Caco-2 (cell line): ENCODE measurements at regions of chr15 and their contacts with region 1.

Region 1: GRCh38 chr15:98904544-98904943 is 103.0 kb downstream of the PGPEP1L start:
- DNase-seq: peak; percentile 57 to 70
- H3K4me3 ChIP-seq: no peak overlapping the region
- H3K4me3 Mint-ChIP-seq: no peak overlapping the region
- H3K27ac Mint-ChIP-seq: no peak overlapping the region
- H3K4me1 ChIP-seq: peaks cover 60% of the 10 kb centered on the region
- H3K4me1 Mint-ChIP-seq: peaks cover 27% of the 10 kb centered on the region
- H3K27me3 ChIP-seq: no peaks in the 10 kb centered on the region
- H3K27me3 Mint-ChIP-seq: no peaks in the 10 kb centered on the region
- CTCF ChIP-seq: peak; percentile 52 to 77

Region 2: GRCh38 chr15:98658831-98659699 is 245.5 kb before region 1 on chr15:
- CTCF ChIA-PET with region 1: no interaction called
- POLR2A ChIA-PET with region 1: no interaction called
- intact Hi-C with region 1: loop called (anchors 2 kb)
- DNase-seq: peak in 1 of 2 experiments; percentile 63
- H3K4me3 ChIP-seq: no peak overlapping the region
- H3K4me3 Mint-ChIP-seq: no peak overlapping the region
- H3K27ac Mint-ChIP-seq: no peak overlapping the region
- H3K4me1 ChIP-seq: peaks cover 12% of the 10 kb centered on the region; the same call in 1 of the 2 replicates
- H3K4me1 Mint-ChIP-seq: peaks cover 20% of the 10 kb centered on the region
- H3K27me3 ChIP-seq: no peaks in the 10 kb centered on the region
- H3K27me3 Mint-ChIP-seq: no peaks in the 10 kb centered on the region
- CTCF ChIP-seq: peak; percentile 79 to 81

Region 3: DNA sequence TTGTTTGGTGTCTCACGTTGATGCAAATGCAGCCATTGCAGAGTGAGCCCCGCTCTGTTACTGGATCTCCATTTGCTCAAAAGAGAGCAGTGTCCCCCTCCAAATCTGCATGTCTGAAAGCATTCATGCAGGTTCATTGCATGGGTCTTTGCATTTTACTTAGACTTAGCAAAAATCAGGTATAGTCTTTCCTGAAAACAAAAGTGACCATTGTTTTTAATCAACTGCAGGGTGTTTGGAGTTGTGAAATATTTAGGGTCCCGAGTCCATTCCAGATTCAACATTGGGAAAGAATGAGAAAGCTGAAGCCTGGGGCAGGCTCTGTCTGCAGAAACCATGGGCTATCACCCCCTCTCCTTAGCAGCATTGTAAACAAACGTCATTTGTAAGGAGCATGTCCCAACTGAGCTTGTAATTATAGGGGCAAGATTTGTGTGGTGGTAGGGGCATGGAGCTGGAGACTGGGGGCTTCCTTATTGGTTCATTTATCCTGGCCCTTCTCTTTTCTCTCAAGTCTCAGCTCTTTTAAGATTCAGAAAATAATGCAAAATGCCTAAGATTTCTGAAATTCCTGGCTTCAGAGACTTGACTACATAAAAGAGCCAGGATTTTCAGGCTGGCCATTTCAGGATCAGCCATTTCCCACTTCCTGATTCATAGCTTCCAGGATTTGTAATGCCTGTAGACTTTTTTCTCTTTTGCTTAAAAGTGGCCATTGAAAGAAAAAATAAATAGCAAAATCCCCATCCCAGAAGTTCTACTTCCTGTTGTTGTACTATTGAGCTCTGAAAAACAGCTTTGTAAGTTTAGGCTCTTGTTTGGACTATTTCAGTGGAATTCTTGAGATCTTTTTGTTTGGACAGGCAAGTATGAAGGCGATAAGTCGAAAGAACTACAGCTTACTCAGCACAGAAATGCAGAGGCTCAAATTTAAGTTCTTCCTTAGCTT is 233.2 kb before region 1 on chr15:
- CTCF ChIA-PET with region 1: no interaction called
- POLR2A ChIA-PET with region 1: no interaction called
- intact Hi-C with region 1: loop called (anchors 5 kb)
- DNase-seq: peak in 1 of 2 experiments; percentile 60
- H3K4me3 ChIP-seq: no peak overlapping the region
- H3K4me3 Mint-ChIP-seq: peak overlapping the region; percentile 56
- H3K27ac Mint-ChIP-seq: peak overlapping the region; percentile 82
- H3K4me1 ChIP-seq: peaks cover 68% of the 10 kb centered on the region
- H3K4me1 Mint-ChIP-seq: peaks cover 42% of the 10 kb centered on the region
- H3K27me3 ChIP-seq: no peaks in the 10 kb centered on the region
- H3K27me3 Mint-ChIP-seq: no peaks in the 10 kb centered on the region
- CTCF ChIP-seq: no peak

Region 4: GRCh38 chr15:98779463-98780071 is 125.0 kb before region 1 on chr15:
- CTCF ChIA-PET with region 1: no interaction called
- POLR2A ChIA-PET with region 1: no interaction called
- intact Hi-C with region 1: loop called (anchors 1 kb)
- DNase-seq: peak; percentile 75 to 84
- H3K4me3 ChIP-seq: no peak overlapping the region
- H3K4me3 Mint-ChIP-seq: no peak overlapping the region
- H3K27ac Mint-ChIP-seq: peak overlapping the region; percentile 58
- H3K4me1 ChIP-seq: no peaks in the 10 kb centered on the region; the same call in none of the 2 replicates
- H3K4me1 Mint-ChIP-seq: peaks cover 16% of the 10 kb centered on the region
- H3K27me3 ChIP-seq: no peaks in the 10 kb centered on the region
- H3K27me3 Mint-ChIP-seq: no peaks in the 10 kb centered on the region
- CTCF ChIP-seq: peak; percentile 81 to 87

Region 5: GRCh38 chr15:98800437-98801233 is 103.9 kb before region 1 on chr15:
- CTCF ChIA-PET with region 1: no interaction called
- POLR2A ChIA-PET with region 1: no interaction called
- intact Hi-C with region 1: loop called (anchors 5 kb)
- DNase-seq: peak; percentile 56 to 57
- H3K4me3 ChIP-seq: peak overlapping the region; percentile 21
- H3K4me3 Mint-ChIP-seq: peak overlapping the region; percentile 68
- H3K27ac Mint-ChIP-seq: peak overlapping the region; percentile 80
- H3K4me1 ChIP-seq: peaks cover 29% of the 10 kb centered on the region
- H3K4me1 Mint-ChIP-seq: peaks cover 28% of the 10 kb centered on the region
- H3K27me3 ChIP-seq: no peaks in the 10 kb centered on the region
- H3K27me3 Mint-ChIP-seq: no peaks in the 10 kb centered on the region
- CTCF ChIP-seq: no peak

Region 6: DNA sequence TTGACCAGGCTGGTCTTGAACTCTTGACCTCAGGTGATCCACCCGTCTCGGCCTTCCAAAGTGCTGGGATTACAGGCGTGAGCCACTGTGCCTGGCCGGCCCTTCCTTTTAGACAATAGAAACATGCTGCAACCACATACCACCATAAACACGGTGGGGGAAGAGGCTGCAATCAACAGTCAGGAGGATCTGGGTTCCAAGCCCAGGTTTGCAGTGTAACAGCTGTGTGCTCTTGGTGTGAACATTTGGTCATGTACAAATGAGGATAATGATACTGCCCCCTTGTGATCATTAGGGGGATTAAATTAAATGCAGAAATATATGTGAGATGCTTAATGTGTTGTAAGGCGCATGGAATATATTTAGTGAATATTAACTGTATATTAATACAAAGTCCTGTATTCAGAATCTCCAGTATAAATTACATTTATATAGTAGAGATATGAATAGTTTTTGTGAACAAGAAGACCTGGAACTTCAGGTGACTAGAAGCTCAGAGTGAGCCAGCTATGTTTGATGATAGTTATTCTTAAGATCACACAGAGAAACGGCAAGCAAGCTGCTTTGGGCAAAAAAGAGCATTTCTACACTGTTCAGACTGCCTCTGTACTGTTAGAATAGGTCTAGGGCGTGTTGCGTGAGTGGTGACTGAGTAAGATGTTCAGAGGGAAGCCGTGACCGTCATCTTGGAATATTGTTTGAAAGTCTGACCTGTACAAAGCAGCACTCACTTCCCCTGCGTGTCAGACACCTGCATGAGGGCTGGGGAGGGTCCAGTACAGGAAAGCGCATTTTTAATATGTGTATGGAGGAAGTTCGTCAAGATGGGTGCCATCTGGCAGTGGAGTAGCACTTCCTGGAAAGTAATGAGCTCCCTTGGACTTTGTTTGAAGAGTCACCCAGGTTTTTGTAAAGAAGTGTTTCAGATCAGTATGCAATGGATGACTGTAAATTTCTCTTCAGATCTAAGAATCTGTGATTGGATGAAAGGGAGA is 22.7 kb before region 1 on chr15:
- CTCF ChIA-PET with region 1: no interaction called
- POLR2A ChIA-PET with region 1: no interaction called
- intact Hi-C with region 1: loop called (anchors 2 kb)
- DNase-seq: peak in 1 of 2 experiments; percentile 34
- H3K4me3 ChIP-seq: no peak overlapping the region
- H3K4me3 Mint-ChIP-seq: no peak overlapping the region
- H3K27ac Mint-ChIP-seq: no peak overlapping the region
- H3K4me1 ChIP-seq: peaks cover 12% of the 10 kb centered on the region
- H3K4me1 Mint-ChIP-seq: peaks cover 14% of the 10 kb centered on the region
- H3K27me3 ChIP-seq: no peaks in the 10 kb centered on the region
- H3K27me3 Mint-ChIP-seq: no peaks in the 10 kb centered on the region
- CTCF ChIP-seq: peak; percentile 28 to 51